K562 (cell line): ENCODE measurements at regions of chr12 and their contacts with region 1.

Region 1: DNA sequence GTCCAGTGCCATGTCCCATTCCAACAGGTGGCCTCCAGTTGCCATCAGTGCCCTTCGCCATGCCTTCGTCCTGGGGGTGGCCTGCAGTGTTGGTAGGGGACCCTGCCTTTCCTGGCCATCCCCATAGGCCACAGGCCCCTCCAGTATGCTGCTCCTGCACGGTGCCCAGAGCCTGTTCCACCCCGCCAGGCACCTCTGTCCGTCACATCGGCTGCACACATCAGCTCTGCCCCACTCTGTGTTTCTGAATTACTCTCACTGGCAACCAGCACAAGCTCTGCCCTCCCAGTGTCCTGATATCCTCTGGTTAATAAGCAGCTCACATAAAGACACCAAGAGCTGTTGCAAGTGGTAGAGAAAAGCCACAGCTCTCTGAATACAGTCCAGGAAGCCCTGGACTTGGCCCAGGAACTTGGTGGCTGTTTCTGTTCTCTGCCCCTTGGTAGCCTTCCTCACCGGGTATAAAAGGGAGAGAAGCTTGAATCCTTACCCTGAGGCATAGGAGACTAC is 31.3 kb upstream of the ATP2A2 start:
- DNase-seq: no peak
- ATAC-seq: no peak
- H3K4me3 ChIP-seq: no peak overlapping the region
- H3K27ac ChIP-seq: no peak overlapping the region
- H3K4me1 ChIP-seq: peaks cover 5 to 9% of the 10 kb centered on the region in 2 experiments; a peak in 3 of 5 replicates
- H3K27me3 ChIP-seq: no peaks in the 10 kb centered on the region
- CTCF ChIP-seq: no peak
- EP300 ChIP-seq: no peak
- POLR2A ChIP-seq: no peak
- RAD21 ChIP-seq: no peak

Region 2: DNA sequence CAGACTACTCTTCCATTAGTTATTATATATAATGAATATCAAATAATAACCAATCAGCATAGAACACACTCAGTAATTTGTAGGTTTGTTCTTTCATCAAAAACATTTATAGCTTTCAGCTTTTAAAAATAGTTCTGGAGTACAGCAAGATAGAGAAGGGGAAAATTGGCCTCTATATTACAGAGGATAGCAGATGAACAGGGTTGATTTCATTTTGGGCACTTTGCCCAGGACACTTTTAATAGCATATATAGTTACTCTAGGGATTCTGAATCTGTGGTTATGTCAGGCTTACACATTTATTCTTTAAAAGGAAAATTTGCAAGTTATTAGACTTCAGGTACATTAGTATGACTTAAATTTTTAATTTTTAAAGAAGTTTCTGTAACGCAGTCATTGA is 73.0 kb before region 1 on chr12:
- CTCF ChIA-PET with region 1: no interaction called
- POLR2A ChIA-PET with region 1: no interaction called
- in situ Hi-C with region 1: no loop called
- intact Hi-C with region 1: no loop called
- DNase-seq: no peak
- ATAC-seq: no peak
- H3K4me3 ChIP-seq: no peak overlapping the region
- H3K27ac ChIP-seq: no peak overlapping the region
- H3K4me1 ChIP-seq: no peaks in the 10 kb centered on the region
- H3K27me3 ChIP-seq: no peaks in the 10 kb centered on the region
- CTCF ChIP-seq: no peak
- EP300 ChIP-seq: no peak
- POLR2A ChIP-seq: no peak
- RAD21 ChIP-seq: no peak

Region 3: GRCh38 chr12:110320550-110320949 is 70.8 kb after region 1 on chr12:
- CTCF ChIA-PET with region 1: no interaction called
- POLR2A ChIA-PET with region 1: interaction called, 3 read pairs
- in situ Hi-C with region 1: no loop called
- intact Hi-C with region 1: loop called (anchors 2 kb)
- DNase-seq: no peak
- ATAC-seq: no peak
- H3K4me3 ChIP-seq: no peak overlapping the region
- H3K27ac ChIP-seq: no peak overlapping the region
- H3K4me1 ChIP-seq: no peaks in the 10 kb centered on the region
- H3K27me3 ChIP-seq: no peaks in the 10 kb centered on the region
- CTCF ChIP-seq: no peak
- EP300 ChIP-seq: no peak
- POLR2A ChIP-seq: no peak
- RAD21 ChIP-seq: no peak